ENCODE measurements at regions of chr1 and their contacts with region 1.

Region 1: DNA sequence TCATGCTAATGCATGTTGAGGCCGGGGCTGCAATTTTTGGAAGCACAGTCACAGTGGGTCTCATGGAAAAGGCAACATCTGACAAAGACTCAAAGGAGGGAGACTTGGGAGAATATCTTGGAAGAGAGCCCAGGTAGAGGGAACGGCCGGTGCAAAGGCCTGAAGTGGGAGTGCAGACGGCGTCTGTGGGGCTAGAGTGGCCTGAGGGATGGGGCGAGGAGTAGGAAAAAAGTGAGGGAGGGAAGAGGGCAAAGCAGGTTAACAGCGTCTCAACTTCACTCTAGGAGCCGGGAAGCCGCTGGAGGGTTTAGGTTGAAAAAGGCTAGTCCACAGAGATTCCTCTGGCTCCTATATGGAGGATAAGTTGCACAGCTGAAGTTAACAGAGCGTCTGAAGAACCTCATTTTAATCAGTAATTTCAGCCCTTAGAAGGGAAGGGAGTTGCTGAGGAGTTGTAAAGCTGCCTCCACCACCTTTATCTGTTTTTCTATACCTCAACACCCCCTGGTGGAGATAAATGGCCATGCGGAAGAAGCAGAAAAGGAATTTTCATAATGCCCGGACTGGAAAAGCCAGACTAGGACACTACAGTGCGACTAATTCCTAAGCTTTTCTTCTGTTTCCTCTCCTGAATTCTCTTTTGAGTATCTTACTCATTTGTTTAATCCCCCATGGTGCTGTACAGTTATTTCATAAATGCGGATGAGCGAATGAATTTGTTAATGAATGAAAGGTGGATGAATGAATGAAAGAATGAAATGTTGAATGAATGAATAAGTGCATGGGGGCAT is 78.7 kb upstream of the ZNF281 start:
- DNase-seq: peak; percentile 56
- ATAC-seq: peak; percentile 83
- H3K4me3 ChIP-seq: no peak overlapping the region
- H3K27ac ChIP-seq: no peak overlapping the region
- H3K4me1 ChIP-seq: peaks cover 6 to 19% of the 10 kb centered on the region in 2 experiments; a peak in 3 of 4 replicates
- H3K27me3 ChIP-seq: no peaks in the 10 kb centered on the region
- CTCF ChIP-seq: peak; percentile 77 to 93 (median 91)
- POLR2A ChIP-seq: no peak
- RAD21 ChIP-seq: peak; percentile 97

Region 2: GRCh38 chr1:200139661-200140250 is 348.8 kb before region 1 on chr1:
- CTCF ChIA-PET with region 1: no interaction called
- POLR2A ChIA-PET with region 1: no interaction called
- RAD21 ChIA-PET with region 1: no interaction called
- intact Hi-C with region 1: loop called (anchors 10 kb)
- DNase-seq: peak; percentile 57
- ATAC-seq: peak; percentile 100
- H3K4me3 ChIP-seq: no peak overlapping the region
- H3K27ac ChIP-seq: no peak overlapping the region
- H3K4me1 ChIP-seq: no peaks in the 10 kb centered on the region
- H3K27me3 ChIP-seq: no peaks in the 10 kb centered on the region
- CTCF ChIP-seq: peak; percentile 64 to 80 (median 76); a peak in 5 of 6 replicates
- POLR2A ChIP-seq: no peak
- RAD21 ChIP-seq: peak; percentile 77

Region 3: DNA sequence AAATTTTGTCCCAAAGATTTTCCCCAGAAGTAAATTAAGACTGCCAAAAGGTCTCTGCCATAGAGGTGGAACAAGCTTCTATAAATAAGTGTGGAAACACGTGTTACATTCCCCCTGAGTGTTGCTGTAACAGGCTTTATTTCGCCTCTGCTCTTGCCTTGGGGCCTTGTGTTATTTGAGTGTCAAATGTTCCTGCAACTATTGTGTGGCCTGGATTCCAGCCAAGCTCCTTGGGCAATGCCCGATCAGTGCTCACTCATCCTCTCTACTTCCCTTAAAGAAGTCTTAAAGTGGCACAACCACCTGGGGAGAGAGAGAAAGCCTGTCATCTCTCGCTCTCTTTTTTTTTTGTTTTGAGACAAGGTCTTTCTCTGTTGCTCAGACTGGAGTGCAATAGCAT is 304.4 kb before region 1 on chr1:
- CTCF ChIA-PET with region 1: no interaction called
- POLR2A ChIA-PET with region 1: no interaction called
- RAD21 ChIA-PET with region 1: no interaction called
- intact Hi-C with region 1: loop called (anchors 5 kb)
- DNase-seq: peak; percentile 42
- ATAC-seq: peak; percentile 56
- H3K4me3 ChIP-seq: no peak overlapping the region
- H3K27ac ChIP-seq: no peak overlapping the region
- H3K4me1 ChIP-seq: peaks cover 22 to 51% of the 10 kb centered on the region in 2 experiments
- H3K27me3 ChIP-seq: no peaks in the 10 kb centered on the region
- CTCF ChIP-seq: no peak
- POLR2A ChIP-seq: no peak
- RAD21 ChIP-seq: peak; percentile 20; the same call in 1 of the 2 replicates

Region 4: DNA sequence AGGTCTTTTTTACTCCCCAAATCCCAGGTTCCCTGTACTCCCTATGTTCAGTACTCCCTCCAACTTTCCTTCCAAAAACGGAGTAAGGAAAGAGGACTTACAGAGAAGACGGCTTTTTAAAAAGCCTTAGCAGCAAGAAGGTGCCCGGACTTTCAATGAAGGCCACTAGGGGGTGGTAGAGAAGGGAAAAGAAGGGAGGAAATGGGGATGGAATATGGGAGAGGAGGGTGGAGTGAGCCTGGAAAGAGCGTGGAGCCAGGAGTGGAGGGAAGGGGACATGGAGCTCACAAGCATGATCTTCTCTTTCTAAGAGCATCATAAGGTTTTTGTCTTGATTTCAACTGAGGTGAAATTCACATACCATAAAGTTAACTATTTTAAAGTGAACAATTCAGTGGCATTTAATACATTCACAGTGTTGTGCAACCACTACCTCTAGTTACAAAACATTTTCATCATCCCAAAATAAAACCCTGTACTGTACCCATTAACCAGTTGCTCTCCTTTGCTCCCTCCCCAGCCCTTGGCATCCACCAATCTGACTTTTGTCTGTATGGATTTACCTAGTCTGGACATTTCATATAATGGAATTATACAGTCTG is 208.7 kb before region 1 on chr1:
- CTCF ChIA-PET with region 1: interaction called, 27 read pairs
- POLR2A ChIA-PET with region 1: no interaction called
- RAD21 ChIA-PET with region 1: interaction called in 1 of 2 experiments, 4 read pairs
- intact Hi-C with region 1: loop called (anchors 1 kb)
- DNase-seq: peak; percentile 55
- ATAC-seq: peak; percentile 97
- H3K4me3 ChIP-seq: no peak overlapping the region
- H3K27ac ChIP-seq: no peak overlapping the region
- H3K4me1 ChIP-seq: no peaks in the 10 kb centered on the region
- H3K27me3 ChIP-seq: no peaks in the 10 kb centered on the region
- CTCF ChIP-seq: peak; percentile 69 to 88 (median 79)
- POLR2A ChIP-seq: no peak
- RAD21 ChIP-seq: peak; percentile 89

Region 5: GRCh38 chr1:200409761-200410565 is 78.6 kb before region 1 on chr1 and contains the start of gene ZNF281:
- CTCF ChIA-PET with region 1: no interaction called
- POLR2A ChIA-PET with region 1: no interaction called
- RAD21 ChIA-PET with region 1: no interaction called
- intact Hi-C with region 1: loop called (anchors 2 kb)
- DNase-seq: peak; percentile 79
- ATAC-seq: peak; percentile 95
- H3K4me3 ChIP-seq: peak within 1 kb of the TSS; percentile 79 to 84
- H3K27ac ChIP-seq: peak within 1 kb of the TSS; percentile 78
- H3K4me1 ChIP-seq: peaks cover 27 to 54% of the 10 kb centered on the region in 2 experiments
- H3K27me3 ChIP-seq: no peaks in the 10 kb centered on the region
- CTCF ChIP-seq: no peak
- POLR2A ChIP-seq: no peak
- RAD21 ChIP-seq: no peak; the same call in 1 of the 2 replicates
- total RNA-seq, gene ZNF281: 23.3 TPM

Measured in HCT116 (cell line).